ENCODE measurements at regions of chr7 and their contacts with region 1.

Region 1: GRCh38 chr7:38907066-38907465 is 1.9 kb downstream of the VPS41 start:
- DNase-seq: no peak
- ATAC-seq: no peak
- H3K4me3 ChIP-seq: no peak overlapping the region
- H3K4me1 ChIP-seq: no peaks in the 10 kb centered on the region
- CTCF ChIP-seq: no peak

Region 2: GRCh38 chr7:38819463-38819862 is 87.6 kb before region 1 on chr7:
- intact Hi-C with region 1: no loop called
- DNase-seq: no peak
- ATAC-seq: no peak
- H3K4me3 ChIP-seq: no peak overlapping the region
- H3K4me1 ChIP-seq: no peaks in the 10 kb centered on the region
- CTCF ChIP-seq: no peak

Region 3: GRCh38 chr7:38858259-38859165 is 48.6 kb before region 1 on chr7:
- intact Hi-C with region 1: loop called in 1 of 2 experiments (anchors 2 kb)
- DNase-seq: no peak
- ATAC-seq: peak; percentile 90
- H3K4me3 ChIP-seq: no peak overlapping the region
- H3K4me1 ChIP-seq: no peaks in the 10 kb centered on the region
- CTCF ChIP-seq: no peak